K562 (cell line): ENCODE measurements at regions of chr9 and their contacts with region 1.

Region 1: GRCh38 chr9:26892251-26893029 is at the start of gene CAAP1:
- DNase-seq: peak; percentile 57 to 88 (median 71)
- ATAC-seq: peak; percentile 89
- H3K4me3 ChIP-seq: peak within 1 kb of the TSS; percentile 83
- H3K27ac ChIP-seq: peak within 1 kb of the TSS; percentile 92
- H3K4me1 ChIP-seq: no peaks in the 10 kb centered on the region; a peak in 1 of 5 replicates
- H3K27me3 ChIP-seq: no peaks in the 10 kb centered on the region
- CTCF ChIP-seq: peak in 2 of 3 experiments; percentile 31 to 40; a peak in 4 of 6 replicates
- EP300 ChIP-seq: no peak
- POLR2A ChIP-seq: peak; percentile 81
- RAD21 ChIP-seq: peak in 1 of 2 experiments; percentile 21; a peak in 1 of 4 replicates
- polyA plus RNA-seq, gene CAAP1: 8.9 TPM

Region 2: GRCh38 chr9:26955921-26956859 is 63.8 kb after region 1 on chr9 and contains the start of gene IFT74:
- CTCF ChIA-PET with region 1: no interaction called
- POLR2A ChIA-PET with region 1: interaction called, 5 read pairs
- in situ Hi-C with region 1: no loop called
- intact Hi-C with region 1: loop called (anchors 10 kb)
- DNase-seq: peak; percentile 73 to 90 (median 82)
- ATAC-seq: peak; percentile 91
- H3K4me3 ChIP-seq: peak within 1 kb of the TSS; percentile 49
- H3K27ac ChIP-seq: peak within 1 kb of the TSS; percentile 96
- H3K4me1 ChIP-seq: no peaks in the 10 kb centered on the region; a peak in 2 of 5 replicates
- H3K27me3 ChIP-seq: no peaks in the 10 kb centered on the region
- CTCF ChIP-seq: no peak
- EP300 ChIP-seq: no peak
- POLR2A ChIP-seq: peak; percentile 56
- RAD21 ChIP-seq: no peak
- polyA plus RNA-seq, gene IFT74: 7.9 to 8.4 TPM